H1 (cell line): ENCODE measurements at regions of chr7 and their contacts with region 1.

Region 1: GRCh38 chr7:32427769-32428291 is 62.4 kb downstream of the LSM5 start:
- DNase-seq: peak; percentile 87 to 97
- H3K4me3 ChIP-seq: peak overlapping the region; percentile 24 to 58 (median 48); a peak in 7 of 8 replicates
- H3K27ac ChIP-seq: no peak overlapping the region
- H3K4me1 ChIP-seq: peaks cover 0 to 10% (median 0%) of the 10 kb centered on the region in 4 experiments; a peak in 5 of 7 replicates
- H3K27me3 ChIP-seq: peaks cover 13 to 44% (median 23%) of the 10 kb centered on the region in 4 experiments
- CTCF ChIP-seq: peak; percentile 43 to 70 (median 47)
- EP300 ChIP-seq: no peak
- POLR2A ChIP-seq: no peak
- RAD21 ChIP-seq: peak in 1 of 2 experiments; percentile 37; a peak in 2 of 4 replicates

Region 2: DNA sequence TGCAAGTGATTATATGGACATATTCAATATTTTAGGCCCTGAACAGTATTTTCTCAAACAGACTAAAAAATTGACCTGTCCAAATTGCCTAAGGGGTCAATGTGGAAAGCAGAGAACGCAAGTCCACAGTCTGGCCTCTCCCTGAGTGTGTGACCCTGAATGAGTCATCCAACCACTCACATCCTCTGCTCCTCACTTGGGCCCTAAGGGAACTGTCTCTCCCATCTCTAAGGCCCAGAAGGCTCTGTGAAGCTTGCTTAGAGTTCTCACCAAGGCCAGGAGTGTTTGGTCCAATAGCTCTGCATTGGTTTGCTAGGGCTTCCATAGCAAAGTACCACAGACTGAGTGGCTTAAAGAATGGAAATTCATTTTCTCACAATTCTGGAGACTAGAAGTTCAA is 92.7 kb before region 1 on chr7:
- CTCF ChIA-PET with region 1: no interaction called
- POLR2A ChIA-PET with region 1: no interaction called
- DNase-seq: no peak
- H3K4me3 ChIP-seq: no peak overlapping the region
- H3K27ac ChIP-seq: no peak overlapping the region
- H3K4me1 ChIP-seq: no peaks in the 10 kb centered on the region
- H3K27me3 ChIP-seq: no peaks in the 10 kb centered on the region
- CTCF ChIP-seq: no peak
- EP300 ChIP-seq: no peak
- POLR2A ChIP-seq: no peak
- RAD21 ChIP-seq: no peak

Region 3: DNA sequence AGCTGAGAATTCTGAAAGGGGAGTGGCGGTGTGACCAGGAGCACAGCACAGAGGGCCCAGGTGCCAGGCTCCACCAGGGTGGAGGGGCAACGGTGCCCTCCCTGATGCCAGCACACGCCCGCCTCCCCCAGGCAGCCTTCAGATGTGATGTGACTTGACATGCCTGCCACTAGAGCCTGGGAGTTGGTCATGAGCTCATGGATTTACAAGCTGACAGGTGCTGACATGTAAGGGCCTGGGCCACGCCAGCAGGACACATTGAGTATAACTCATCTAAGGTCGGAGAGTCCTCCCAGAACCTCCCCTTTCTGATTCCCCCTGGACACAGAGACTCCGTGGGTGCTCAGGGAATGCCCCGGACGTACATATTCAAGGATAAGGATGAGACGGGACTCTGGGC is 11.9 kb before region 1 on chr7:
- CTCF ChIA-PET with region 1: interaction called, 11 read pairs
- POLR2A ChIA-PET with region 1: interaction called, 4 read pairs
- DNase-seq: no peak
- H3K4me3 ChIP-seq: no peak overlapping the region
- H3K27ac ChIP-seq: no peak overlapping the region
- H3K4me1 ChIP-seq: 0 out of 7 replicates have a peak, but pooled peaks cover 0 to 2% (median 0%) of the 10 kb centered on the region in 4 experiments
- H3K27me3 ChIP-seq: no peaks in the 10 kb centered on the region
- CTCF ChIP-seq: no peak
- EP300 ChIP-seq: no peak
- POLR2A ChIP-seq: no peak
- RAD21 ChIP-seq: no peak